ENCODE measurements at regions of chr15 and their contacts with region 1.

Region 1: DNA sequence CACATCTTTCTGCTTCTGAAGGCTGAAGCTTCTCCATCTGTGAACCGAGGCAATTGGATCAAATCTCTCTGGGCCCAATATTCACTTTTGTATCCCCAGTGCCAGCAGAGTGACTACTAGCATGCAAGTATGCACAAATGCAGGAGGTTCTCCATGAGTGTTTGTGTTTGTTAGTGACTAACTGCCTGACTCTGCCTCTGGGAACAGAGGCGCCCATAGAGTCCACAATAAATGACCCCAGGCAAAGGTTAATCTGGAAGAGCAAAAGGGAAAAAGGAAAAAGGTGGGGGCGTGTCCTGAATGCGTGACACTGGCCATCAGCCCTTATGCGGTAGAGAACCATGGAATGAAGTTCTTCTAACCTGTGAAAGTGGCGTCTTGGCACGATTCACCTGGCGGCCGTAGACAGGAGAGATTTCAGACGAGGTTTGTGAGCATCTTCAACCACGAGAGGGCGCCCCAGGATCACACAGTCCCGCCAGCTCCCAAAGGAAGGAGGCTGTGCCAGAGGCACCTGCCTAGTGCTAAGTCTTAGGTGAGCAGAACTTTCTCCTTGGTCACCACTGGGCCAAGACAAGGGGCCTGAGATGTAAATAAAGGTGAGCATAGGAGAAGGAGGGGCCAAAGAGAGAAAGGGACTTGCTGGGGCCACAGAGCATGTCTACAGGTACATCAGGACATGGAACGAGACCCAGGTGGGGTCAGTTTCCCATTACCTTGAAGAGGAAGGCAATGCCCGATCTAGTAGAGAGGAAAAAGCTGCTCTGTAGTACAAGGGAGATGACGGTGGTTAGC is 44.2 kb downstream of the RBPMS2 start:
- DNase-seq: peak; percentile 76
- CTCF ChIP-seq: peak; percentile 83

Region 2: GRCh38 chr15:64693134-64693533 is 38.1 kb before region 1 on chr15:
- in situ Hi-C with region 1: loop called (anchors 5 kb)
- DNase-seq: no peak
- CTCF ChIP-seq: no peak

Region 3: GRCh38 chr15:64809649-64810496 is 78.7 kb after region 1 on chr15:
- in situ Hi-C with region 1: loop called (anchors 5 kb)
- DNase-seq: peak; percentile 84
- CTCF ChIP-seq: peak; percentile 94

Region 4: GRCh38 chr15:64905119-64905831 is 174.1 kb after region 1 on chr15:
- in situ Hi-C with region 1: loop called (anchors 10 kb)
- DNase-seq: peak; percentile 87
- CTCF ChIP-seq: peak; percentile 93

Measured in GM13977 (cell line).